MCF 10A (cell line): ENCODE measurements at regions of chr1 and their contacts with region 1.

Region 1: DNA sequence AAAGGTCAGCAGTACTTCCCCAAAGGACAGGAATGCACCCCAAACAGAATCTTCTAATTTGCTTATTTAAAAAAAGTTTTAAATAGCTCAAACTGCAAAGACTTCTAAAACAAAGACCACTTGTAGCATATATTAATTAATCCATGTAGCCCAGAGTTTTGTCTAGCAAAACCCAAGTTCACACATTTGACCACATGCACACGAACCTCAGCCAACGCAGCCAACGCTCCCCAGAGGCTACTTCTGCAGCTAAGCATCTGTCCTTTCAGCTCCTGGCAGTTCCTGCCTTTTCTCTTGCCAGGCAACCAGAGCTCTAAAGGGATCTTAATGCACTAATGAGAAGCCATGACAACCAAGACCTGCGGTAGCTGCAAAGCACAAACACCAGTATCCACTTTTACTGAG is 89.6 kb downstream of the RERE start:
- DNase-seq: no peak
- H3K4me3 Mint-ChIP-seq: no peak overlapping the region
- H3K27ac Mint-ChIP-seq: no peak overlapping the region
- H3K4me1 Mint-ChIP-seq: peaks cover 9% of the 10 kb centered on the region
- H3K27me3 Mint-ChIP-seq: no peaks in the 10 kb centered on the region
- CTCF ChIP-seq: no peak

Region 2: GRCh38 chr1:8374812-8375211 is 353.0 kb before region 1 on chr1:
- CTCF ChIA-PET with region 1: interaction called, 4 read pairs
- POLR2A ChIA-PET with region 1: no interaction called
- intact Hi-C with region 1: loop called (anchors 1 kb)
- DNase-seq: peak; percentile 61
- H3K4me3 Mint-ChIP-seq: no peak overlapping the region
- H3K27ac Mint-ChIP-seq: no peak overlapping the region
- H3K4me1 Mint-ChIP-seq: peaks cover 17% of the 10 kb centered on the region
- H3K27me3 Mint-ChIP-seq: no peaks in the 10 kb centered on the region
- CTCF ChIP-seq: peak; percentile 31

Region 3: GRCh38 chr1:8571200-8571984 is 156.4 kb before region 1 on chr1:
- CTCF ChIA-PET with region 1: interaction called, 19 read pairs
- POLR2A ChIA-PET with region 1: interaction called, 3 read pairs
- intact Hi-C with region 1: no loop called
- DNase-seq: peak; percentile 33
- H3K4me3 Mint-ChIP-seq: no peak overlapping the region
- H3K27ac Mint-ChIP-seq: no peak overlapping the region
- H3K4me1 Mint-ChIP-seq: peaks cover 11% of the 10 kb centered on the region
- H3K27me3 Mint-ChIP-seq: no peaks in the 10 kb centered on the region
- CTCF ChIP-seq: peak; percentile 52

Region 4: GRCh38 chr1:8712413-8713231 is 15.2 kb before region 1 on chr1:
- CTCF ChIA-PET with region 1: interaction called, 16 read pairs
- POLR2A ChIA-PET with region 1: interaction called, 10 read pairs
- intact Hi-C with region 1: no loop called
- DNase-seq: peak; percentile 88
- H3K4me3 Mint-ChIP-seq: peak overlapping the region; percentile 50
- H3K27ac Mint-ChIP-seq: peak overlapping the region; percentile 82
- H3K4me1 Mint-ChIP-seq: peaks cover 22% of the 10 kb centered on the region
- H3K27me3 Mint-ChIP-seq: no peaks in the 10 kb centered on the region
- CTCF ChIP-seq: no peak

Region 5: DNA sequence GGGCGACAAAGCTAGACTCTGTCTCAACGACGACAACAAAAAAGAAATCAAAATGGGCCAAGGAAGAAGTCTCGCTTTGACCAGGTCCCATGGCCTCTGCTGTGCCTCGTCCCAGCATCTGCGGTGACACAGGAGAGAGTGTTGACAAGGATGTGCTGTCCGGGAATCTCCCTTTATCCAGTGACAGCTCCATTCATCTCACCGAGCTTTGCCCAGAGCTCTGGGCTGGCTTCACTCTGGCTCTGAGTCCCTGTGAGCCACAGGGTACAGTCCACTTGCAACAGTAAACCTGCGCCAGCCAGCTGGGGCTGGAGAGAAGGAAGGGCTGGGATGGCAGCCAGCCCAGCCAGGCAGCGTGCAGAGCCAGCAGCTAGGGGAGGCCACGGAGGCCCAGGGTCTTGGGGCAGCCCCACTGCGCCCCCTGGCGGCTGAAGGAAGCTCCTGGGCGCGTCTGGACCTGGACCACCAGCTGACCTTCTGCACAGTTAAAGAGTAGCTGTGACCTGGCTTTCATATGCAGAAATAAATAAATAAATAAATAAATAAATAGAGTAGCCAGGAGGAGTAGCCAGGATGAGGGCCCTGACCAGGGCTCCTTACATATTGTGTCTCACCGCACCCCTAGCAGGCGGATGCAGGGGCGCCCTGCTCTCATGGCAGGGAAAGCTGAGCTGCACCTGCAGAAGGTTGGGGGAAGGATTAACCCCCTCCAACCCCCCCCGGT is 121.0 kb after region 1 on chr1:
- CTCF ChIA-PET with region 1: interaction called, 36 read pairs
- POLR2A ChIA-PET with region 1: interaction called, 10 read pairs
- intact Hi-C with region 1: loop called (anchors 2 kb)
- DNase-seq: peak; percentile 95
- H3K4me3 Mint-ChIP-seq: no peak overlapping the region
- H3K27ac Mint-ChIP-seq: no peak overlapping the region
- H3K4me1 Mint-ChIP-seq: peaks cover 4% of the 10 kb centered on the region
- H3K27me3 Mint-ChIP-seq: peaks cover 4% of the 10 kb centered on the region
- CTCF ChIP-seq: peak; percentile 88